Activated CD4-positive, alpha-beta memory T cell treated with anti-CD3 and anti-CD28 coated beads for 36 hours (primary cell): ENCODE measurements at regions of chr2 and their contacts with region 1.

Region 1: DNA sequence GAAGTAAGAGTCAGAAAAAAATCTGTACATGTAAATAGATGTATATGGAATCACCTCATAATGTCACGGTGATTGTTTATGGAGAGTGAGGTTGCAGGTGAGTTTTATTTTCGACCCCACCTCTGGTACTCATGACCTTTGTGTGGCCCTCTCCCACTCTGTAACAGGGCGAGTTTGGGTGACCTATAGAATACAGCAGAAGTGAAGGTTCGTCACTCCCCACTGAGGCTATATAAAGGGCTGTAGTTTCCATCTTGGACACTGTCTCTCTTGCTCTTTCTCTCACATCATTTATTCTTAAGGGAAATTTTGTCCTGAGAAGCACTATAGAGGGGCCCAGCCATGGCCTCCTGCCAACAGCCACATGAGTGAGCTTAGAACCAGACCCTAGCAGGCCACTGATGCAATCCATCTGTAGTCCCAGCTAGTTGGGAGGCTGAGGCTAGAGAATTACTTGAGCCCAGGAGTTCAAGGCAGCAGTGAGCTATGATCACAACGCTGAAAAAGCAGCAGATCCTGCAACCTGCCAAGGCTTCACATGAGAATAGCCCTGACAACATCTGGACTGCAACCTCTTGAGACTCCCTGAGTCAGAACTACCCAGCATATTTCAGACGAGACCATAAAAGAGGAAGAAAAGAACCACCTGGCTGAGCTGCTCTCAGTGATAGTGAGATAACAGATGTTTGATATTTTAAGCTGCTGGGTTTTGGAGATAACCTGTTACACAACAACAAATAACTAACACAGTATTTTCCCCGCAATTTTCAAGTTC is 74.3 kb upstream of the SLC1A4 start:
- DNase-seq: no peak
- H3K4me3 Mint-ChIP-seq: no peak overlapping the region
- H3K27ac Mint-ChIP-seq: no peak overlapping the region
- H3K4me1 Mint-ChIP-seq: peaks cover 15% of the 10 kb centered on the region
- H3K27me3 Mint-ChIP-seq: no peaks in the 10 kb centered on the region

Region 2: DNA sequence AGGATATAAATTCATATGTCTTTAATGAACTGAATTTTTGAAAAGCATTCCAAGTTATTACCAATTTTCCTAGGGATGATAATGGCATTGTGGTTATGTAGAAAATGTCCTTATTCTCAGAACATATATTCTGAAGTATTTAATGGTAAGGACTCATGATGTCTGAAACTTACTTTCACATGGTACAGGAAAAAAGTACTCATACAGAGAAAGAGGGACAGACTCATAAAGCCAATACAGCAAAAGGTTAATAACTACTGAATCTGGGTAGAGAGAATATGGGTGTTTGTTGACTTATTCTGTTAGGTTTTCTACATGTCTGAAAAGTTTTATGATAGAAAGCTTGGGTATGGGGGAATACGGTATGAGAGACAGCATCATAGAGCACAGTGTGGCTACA is 176.9 kb before region 1 on chr2:
- CTCF ChIA-PET with region 1: no interaction called
- POLR2A ChIA-PET with region 1: no interaction called
- intact Hi-C with region 1: no loop called
- DNase-seq: no peak
- H3K4me3 Mint-ChIP-seq: no peak overlapping the region
- H3K27ac Mint-ChIP-seq: no peak overlapping the region
- H3K4me1 Mint-ChIP-seq: peaks cover 16% of the 10 kb centered on the region
- H3K27me3 Mint-ChIP-seq: no peaks in the 10 kb centered on the region

Region 3: GRCh38 chr2:64945973-64946768 is 31.2 kb after region 1 on chr2:
- CTCF ChIA-PET with region 1: interaction called, 18 read pairs
- POLR2A ChIA-PET with region 1: no interaction called
- intact Hi-C with region 1: no loop called
- DNase-seq: peak; percentile 83
- H3K4me3 Mint-ChIP-seq: peak overlapping the region; percentile 61
- H3K27ac Mint-ChIP-seq: peak overlapping the region; percentile 47
- H3K4me1 Mint-ChIP-seq: peaks cover 27% of the 10 kb centered on the region
- H3K27me3 Mint-ChIP-seq: no peaks in the 10 kb centered on the region

Region 4: DNA sequence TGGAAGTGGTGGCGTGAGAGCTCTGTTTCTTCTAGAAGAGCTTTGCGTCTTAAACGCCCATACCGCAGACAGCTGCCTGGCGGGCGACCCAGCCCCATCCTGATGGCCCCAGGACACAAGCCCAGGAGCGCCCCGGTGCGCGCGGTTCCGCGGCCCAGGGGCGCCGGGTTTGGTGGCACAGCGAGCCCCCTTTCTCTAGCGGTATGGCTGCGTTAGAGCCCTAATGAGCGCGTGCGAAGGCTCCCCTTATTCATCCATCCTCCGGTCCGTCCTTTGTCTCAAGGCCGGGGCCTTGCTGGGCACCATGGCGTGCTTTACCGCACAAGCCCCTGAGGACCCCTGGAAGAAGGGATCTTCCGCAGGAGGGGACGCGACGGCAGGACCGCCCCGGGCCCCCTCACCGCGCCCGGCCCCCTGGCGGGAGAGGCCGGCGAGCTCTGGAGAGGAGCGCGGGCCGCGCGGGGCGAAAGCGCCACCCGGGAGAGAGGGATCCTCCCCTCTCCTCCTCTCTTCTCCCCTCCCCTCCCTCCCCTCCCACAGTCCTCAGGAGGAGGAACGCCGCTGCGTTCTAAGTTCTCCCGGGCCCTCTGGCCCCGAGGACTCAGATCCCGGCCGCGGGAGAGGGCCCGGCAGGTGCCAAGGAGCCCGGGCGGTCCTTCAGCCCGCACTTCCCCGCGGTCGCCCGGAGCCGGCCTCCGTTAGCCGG is 73.7 kb after region 1 on chr2:
- CTCF ChIA-PET with region 1: interaction called, 40 read pairs
- POLR2A ChIA-PET with region 1: interaction called, 3 read pairs
- intact Hi-C with region 1: loop called (anchors 1 kb)
- DNase-seq: peak; percentile 81
- H3K4me3 Mint-ChIP-seq: peak overlapping the region; percentile 59
- H3K27ac Mint-ChIP-seq: peak overlapping the region; percentile 65
- H3K4me1 Mint-ChIP-seq: peaks cover 54% of the 10 kb centered on the region
- H3K27me3 Mint-ChIP-seq: peaks cover 5% of the 10 kb centered on the region

Region 5: GRCh38 chr2:65040400-65041261 is 125.7 kb after region 1 on chr2:
- CTCF ChIA-PET with region 1: interaction called, 232 read pairs
- POLR2A ChIA-PET with region 1: interaction called, 3 read pairs
- intact Hi-C with region 1: loop called (anchors 1 kb)
- DNase-seq: peak; percentile 85
- H3K4me3 Mint-ChIP-seq: peak overlapping the region; percentile 28
- H3K27ac Mint-ChIP-seq: no peak overlapping the region
- H3K4me1 Mint-ChIP-seq: peaks cover 6% of the 10 kb centered on the region
- H3K27me3 Mint-ChIP-seq: no peaks in the 10 kb centered on the region

Region 6: DNA sequence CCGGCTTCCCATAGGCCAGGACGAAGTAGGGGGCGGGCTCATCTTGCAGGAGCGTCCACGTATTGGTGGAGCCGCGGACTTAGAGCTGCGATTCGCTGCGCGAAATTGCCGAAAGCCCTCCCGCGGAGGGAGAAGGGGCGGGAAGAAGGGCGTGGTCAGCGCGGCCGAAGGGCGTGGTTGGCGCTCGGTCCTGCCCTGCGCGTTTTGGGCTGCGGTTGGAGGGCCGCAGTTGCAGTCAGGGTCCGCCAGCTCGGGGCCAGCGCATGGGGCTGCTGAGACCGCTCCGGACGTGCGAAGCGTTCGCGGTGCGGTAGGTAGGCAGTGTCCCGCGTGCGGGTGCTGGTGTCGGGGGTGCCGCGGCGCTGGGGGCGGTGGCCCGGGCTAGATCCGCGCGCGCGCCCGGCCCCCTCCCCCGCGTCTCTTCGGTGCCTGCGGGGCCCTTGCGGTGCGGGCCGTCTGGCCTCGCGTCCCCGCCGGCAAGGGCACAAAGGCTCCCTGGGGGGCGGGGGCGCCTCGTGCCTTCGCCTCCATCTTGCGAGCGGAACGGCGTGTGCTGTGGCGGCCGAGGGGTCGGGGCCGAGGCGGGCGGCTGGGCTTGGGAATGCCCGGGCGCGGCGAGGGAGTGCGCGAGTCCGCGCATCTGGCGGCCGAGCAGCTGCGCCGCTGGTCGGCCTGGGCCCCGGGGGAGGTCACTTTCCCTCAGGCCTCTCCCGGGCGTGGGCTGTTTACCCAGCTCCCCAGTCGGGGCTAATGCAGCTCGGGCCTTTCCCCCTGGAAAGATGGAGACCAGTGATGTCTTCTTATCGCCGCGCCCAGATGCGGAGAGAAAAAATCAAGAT is 141.5 kb after region 1 on chr2 and contains the start of gene CEP68:
- CTCF ChIA-PET with region 1: interaction called, 48 read pairs
- POLR2A ChIA-PET with region 1: no interaction called
- intact Hi-C with region 1: no loop called
- DNase-seq: peak; percentile 98
- H3K4me3 Mint-ChIP-seq: peak within 1 kb of the TSS; percentile 94
- H3K27ac Mint-ChIP-seq: peak within 1 kb of the TSS; percentile 78
- H3K4me1 Mint-ChIP-seq: peaks cover 50% of the 10 kb centered on the region
- H3K27me3 Mint-ChIP-seq: no peaks in the 10 kb centered on the region
- total RNA-seq, gene CEP68: 6.6 to 8.0 TPM

Region 7: GRCh38 chr2:65169760-65170136 is 254.8 kb after region 1 on chr2:
- CTCF ChIA-PET with region 1: interaction called, 24 read pairs
- POLR2A ChIA-PET with region 1: no interaction called
- intact Hi-C with region 1: loop called (anchors 1 kb)
- DNase-seq: no peak
- H3K4me3 Mint-ChIP-seq: no peak overlapping the region
- H3K27ac Mint-ChIP-seq: no peak overlapping the region
- H3K4me1 Mint-ChIP-seq: no peaks in the 10 kb centered on the region
- H3K27me3 Mint-ChIP-seq: no peaks in the 10 kb centered on the region

Region 8: GRCh38 chr2:65576861-65577601 is 662.1 kb after region 1 on chr2:
- CTCF ChIA-PET with region 1: no interaction called
- POLR2A ChIA-PET with region 1: no interaction called
- intact Hi-C with region 1: loop called (anchors 2 kb)
- DNase-seq: no peak
- H3K4me3 Mint-ChIP-seq: no peak overlapping the region
- H3K27ac Mint-ChIP-seq: no peak overlapping the region
- H3K4me1 Mint-ChIP-seq: peaks cover 3% of the 10 kb centered on the region
- H3K27me3 Mint-ChIP-seq: peaks cover 2% of the 10 kb centered on the region

Region 9: DNA sequence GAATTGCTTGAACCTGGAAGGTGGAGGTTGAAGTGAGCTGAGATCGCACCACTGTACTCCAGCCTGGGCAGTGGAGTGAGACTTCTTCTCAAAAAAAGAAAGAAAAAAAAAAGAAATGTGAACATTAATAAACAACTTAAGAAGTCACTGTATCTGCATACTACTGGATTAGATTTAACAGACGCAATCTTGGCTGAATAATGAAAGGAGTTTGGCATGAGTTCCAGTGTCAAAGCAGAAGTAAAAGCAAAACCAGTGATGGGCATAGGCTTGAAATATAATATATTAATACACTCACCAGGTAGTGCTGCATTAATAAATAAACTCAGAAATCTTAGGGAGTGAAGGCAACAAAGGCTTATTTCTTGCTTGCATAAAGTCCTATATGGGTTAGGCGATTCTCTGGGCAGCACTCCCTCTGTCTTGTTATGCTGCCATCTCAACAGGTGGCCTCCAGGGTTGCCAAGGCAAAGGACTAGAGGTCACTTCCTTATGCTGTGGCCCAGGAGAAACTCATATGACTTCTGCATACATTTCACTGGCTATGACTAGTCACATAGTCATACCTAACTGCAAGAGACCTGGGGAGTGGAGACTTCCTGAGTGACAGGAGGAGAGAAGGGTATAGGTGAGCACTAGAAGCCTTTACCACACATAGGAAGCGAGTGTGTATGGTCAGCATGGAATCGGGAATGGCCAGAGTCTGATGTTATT is 813.7 kb after region 1 on chr2:
- CTCF ChIA-PET with region 1: no interaction called
- POLR2A ChIA-PET with region 1: no interaction called
- intact Hi-C with region 1: no loop called
- DNase-seq: no peak
- H3K4me3 Mint-ChIP-seq: no peak overlapping the region
- H3K27ac Mint-ChIP-seq: no peak overlapping the region
- H3K4me1 Mint-ChIP-seq: no peaks in the 10 kb centered on the region
- H3K27me3 Mint-ChIP-seq: no peaks in the 10 kb centered on the region